CD4-positive, alpha-beta memory T cell (primary cell): ENCODE measurements at regions of chr3 and their contacts with region 1.

Region 1: DNA sequence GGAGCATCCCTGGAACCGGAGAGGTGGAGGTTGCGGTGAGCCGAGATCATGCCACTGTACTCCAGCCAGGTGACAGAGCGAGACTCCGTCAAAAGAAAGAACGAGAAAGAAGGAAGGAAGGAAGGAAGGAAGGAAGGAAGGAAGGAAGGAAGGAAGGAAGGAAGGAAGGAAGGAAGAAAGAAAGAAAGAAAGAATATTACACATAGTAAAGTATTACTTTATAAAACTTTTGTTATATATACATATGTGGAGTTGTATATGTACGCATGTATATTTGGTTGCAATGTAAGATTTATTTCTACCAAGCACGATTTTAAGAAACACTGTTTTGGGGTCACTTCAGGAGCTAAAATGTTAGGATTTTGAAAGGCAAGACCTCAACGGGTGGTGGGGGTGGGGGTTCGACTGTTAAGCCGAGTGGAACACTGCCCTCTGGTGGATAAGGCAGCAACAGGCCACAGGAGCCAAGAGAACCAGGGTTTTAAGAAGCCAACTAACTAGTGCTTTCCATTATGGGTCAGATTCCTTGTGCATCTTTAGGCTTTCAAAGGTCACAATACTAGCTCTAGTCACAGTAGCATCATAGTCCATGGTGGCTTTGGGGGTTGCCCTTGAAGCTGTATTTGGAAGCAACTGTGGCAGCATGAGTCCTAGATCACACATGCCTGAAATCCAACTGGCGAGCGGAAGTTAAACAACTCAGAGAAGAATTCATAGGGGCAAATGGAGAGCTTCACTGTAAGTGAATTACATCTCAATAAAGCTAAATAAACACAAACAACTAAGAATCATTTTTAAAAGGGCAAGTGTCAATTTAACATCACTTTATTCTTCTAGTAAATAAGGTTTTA is 22.5 kb downstream of the GLB1 start:
- DNase-seq: peak; percentile 62 to 68 (median 65)
- H3K4me3 ChIP-seq: no peak overlapping the region
- H3K4me3 Mint-ChIP-seq: peak overlapping the region in 3 of 8 donors; percentile 56 to 70 (median 67)
- H3K27ac ChIP-seq: no peak overlapping the region
- H3K27ac Mint-ChIP-seq: peak overlapping the region; percentile 34 to 75 (median 54)
- H3K4me1 ChIP-seq: peaks cover 40% of the 10 kb centered on the region
- H3K4me1 Mint-ChIP-seq: peaks cover 31 to 55% (median 43%) of the 10 kb centered on the region in 4 donors
- H3K27me3 ChIP-seq: no peaks in the 10 kb centered on the region
- H3K27me3 Mint-ChIP-seq: no peaks in the 10 kb centered on the region

Region 2: DNA sequence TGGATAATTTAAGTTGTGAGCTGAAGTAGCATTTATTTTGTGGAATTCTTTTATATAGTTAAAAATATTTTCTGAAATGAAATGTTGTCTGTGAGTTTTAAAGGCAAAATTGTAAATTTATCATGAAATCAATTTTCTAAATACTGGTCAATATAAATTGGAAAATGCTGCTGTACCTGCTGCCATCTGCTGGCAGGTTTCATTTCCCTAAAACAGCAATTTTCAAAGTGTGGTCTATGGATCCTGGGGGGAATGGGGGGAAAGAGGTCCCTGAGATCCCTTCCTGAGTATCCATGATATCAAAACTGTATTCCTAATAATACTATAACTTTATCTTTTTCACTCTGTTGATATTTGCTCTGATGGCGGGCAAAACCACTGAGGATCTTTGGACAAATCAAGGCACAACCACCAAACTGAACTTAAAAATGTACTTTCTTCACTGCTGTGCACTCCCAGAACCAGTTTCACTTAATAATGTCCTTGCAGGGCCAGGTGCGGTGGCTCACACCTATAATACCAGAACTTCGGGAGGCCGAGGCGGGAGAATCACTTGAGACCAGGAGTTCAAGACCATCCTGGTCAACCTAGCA is 140.2 kb before region 1 on chr3:
- CTCF ChIA-PET with region 1: interaction called, 11 read pairs
- POLR2A ChIA-PET with region 1: no interaction called
- intact Hi-C with region 1: no loop called
- DNase-seq: no peak
- H3K4me3 ChIP-seq: no peak overlapping the region
- H3K4me3 Mint-ChIP-seq: no peak overlapping the region
- H3K27ac ChIP-seq: no peak overlapping the region
- H3K27ac Mint-ChIP-seq: no peak overlapping the region
- H3K4me1 ChIP-seq: no peaks in the 10 kb centered on the region
- H3K4me1 Mint-ChIP-seq: no peaks in the 10 kb centered on the region
- H3K27me3 ChIP-seq: no peaks in the 10 kb centered on the region
- H3K27me3 Mint-ChIP-seq: peaks cover 0 to 14% of the 10 kb centered on the region in 2 donors

Region 3: GRCh38 chr3:32973982-32974381 is 100.5 kb before region 1 on chr3:
- CTCF ChIA-PET with region 1: interaction called, 19 read pairs
- POLR2A ChIA-PET with region 1: interaction called, 6 read pairs
- intact Hi-C with region 1: no loop called
- DNase-seq: peak; percentile 54 to 72 (median 62)
- H3K4me3 ChIP-seq: no peak overlapping the region
- H3K4me3 Mint-ChIP-seq: peak overlapping the region in 7 of 8 donors; percentile 47 to 85 (median 72)
- H3K27ac ChIP-seq: peak overlapping the region; percentile 14
- H3K27ac Mint-ChIP-seq: peak overlapping the region; percentile 62 to 93 (median 87)
- H3K4me1 ChIP-seq: peaks cover 48% of the 10 kb centered on the region
- H3K4me1 Mint-ChIP-seq: peaks cover 40 to 66% (median 46%) of the 10 kb centered on the region in 4 donors
- H3K27me3 ChIP-seq: no peaks in the 10 kb centered on the region
- H3K27me3 Mint-ChIP-seq: no peaks in the 10 kb centered on the region

Region 4: DNA sequence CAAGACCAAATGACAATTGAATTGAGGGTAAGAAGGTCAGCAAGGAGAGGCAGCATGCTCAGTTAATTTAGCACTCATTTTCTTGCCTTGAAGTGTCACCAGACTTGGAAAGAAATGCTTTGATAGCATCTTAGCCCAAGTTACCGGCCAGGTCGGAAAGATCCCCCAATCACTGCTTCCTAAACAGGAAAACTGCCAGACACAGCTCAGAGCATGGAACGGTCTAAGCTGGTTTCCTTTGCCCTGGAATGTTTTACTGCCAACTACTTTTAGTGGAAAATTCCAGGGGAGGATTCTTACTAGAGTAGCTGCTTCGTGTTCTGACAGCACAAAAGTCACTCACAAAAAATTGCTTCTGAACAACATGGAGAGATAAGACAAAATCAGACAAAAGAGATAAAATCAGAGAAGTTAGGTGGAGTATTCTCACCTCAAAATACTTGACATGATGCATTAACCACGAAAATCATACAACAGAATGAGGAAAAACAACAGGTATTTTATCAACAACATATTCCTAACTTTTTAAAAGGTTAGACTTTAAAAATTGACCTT is 57.5 kb before region 1 on chr3:
- CTCF ChIA-PET with region 1: interaction called, 17 read pairs
- POLR2A ChIA-PET with region 1: interaction called, 4 read pairs
- intact Hi-C with region 1: loop called (anchors 2 kb)
- DNase-seq: no peak
- H3K4me3 ChIP-seq: no peak overlapping the region
- H3K4me3 Mint-ChIP-seq: peak overlapping the region; percentile 28 to 79 (median 55)
- H3K27ac ChIP-seq: peak overlapping the region; percentile 11
- H3K27ac Mint-ChIP-seq: peak overlapping the region; percentile 2 to 96 (median 82)
- H3K4me1 ChIP-seq: peaks cover 71% of the 10 kb centered on the region
- H3K4me1 Mint-ChIP-seq: peaks cover 58 to 96% (median 77%) of the 10 kb centered on the region in 4 donors
- H3K27me3 ChIP-seq: no peaks in the 10 kb centered on the region
- H3K27me3 Mint-ChIP-seq: no peaks in the 10 kb centered on the region

Region 5: DNA sequence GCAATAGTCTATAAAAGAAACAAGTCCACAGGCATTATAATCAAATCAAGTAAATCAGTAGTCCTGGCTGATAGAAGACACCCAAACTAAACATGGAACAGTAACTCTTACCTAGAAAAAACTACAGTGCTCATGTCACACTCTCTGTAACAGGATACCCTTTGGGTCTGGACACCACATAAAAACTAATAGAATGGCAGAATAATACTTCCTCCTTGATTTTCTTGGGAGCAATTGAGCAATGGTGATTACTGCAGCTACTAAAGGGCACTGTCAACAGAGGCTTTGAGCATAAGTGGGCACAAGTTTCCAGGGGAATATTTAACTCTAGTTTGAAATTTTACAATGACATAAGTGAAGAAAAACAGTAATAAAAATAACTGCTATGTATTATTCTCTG is 37.0 kb before region 1 on chr3:
- CTCF ChIA-PET with region 1: interaction called, 171 read pairs
- POLR2A ChIA-PET with region 1: interaction called, 6 read pairs
- intact Hi-C with region 1: no loop called
- DNase-seq: no peak
- H3K4me3 ChIP-seq: no peak overlapping the region
- H3K4me3 Mint-ChIP-seq: no peak overlapping the region
- H3K27ac ChIP-seq: no peak overlapping the region
- H3K27ac Mint-ChIP-seq: peak overlapping the region in 1 of 7 donors; percentile 42
- H3K4me1 ChIP-seq: peaks cover 25% of the 10 kb centered on the region
- H3K4me1 Mint-ChIP-seq: peaks cover 24 to 42% (median 33%) of the 10 kb centered on the region in 4 donors
- H3K27me3 ChIP-seq: no peaks in the 10 kb centered on the region
- H3K27me3 Mint-ChIP-seq: no peaks in the 10 kb centered on the region

Region 6: GRCh38 chr3:33089515-33089914 is 15.1 kb after region 1 on chr3:
- CTCF ChIA-PET with region 1: interaction called, 18 read pairs
- POLR2A ChIA-PET with region 1: no interaction called
- intact Hi-C with region 1: no loop called
- DNase-seq: peak in 4 of 5 donors; percentile 26 to 48 (median 35)
- H3K4me3 ChIP-seq: no peak overlapping the region
- H3K4me3 Mint-ChIP-seq: peak overlapping the region in 7 of 8 donors; percentile 2 to 57 (median 32)
- H3K27ac ChIP-seq: peak overlapping the region; percentile 11
- H3K27ac Mint-ChIP-seq: peak overlapping the region; percentile 36 to 82 (median 67)
- H3K4me1 ChIP-seq: peaks cover 77% of the 10 kb centered on the region
- H3K4me1 Mint-ChIP-seq: peaks cover 59 to 94% (median 78%) of the 10 kb centered on the region in 4 donors
- H3K27me3 ChIP-seq: no peaks in the 10 kb centered on the region
- H3K27me3 Mint-ChIP-seq: no peaks in the 10 kb centered on the region

Region 7: GRCh38 chr3:33372218-33373081 is 298.0 kb after region 1 on chr3:
- CTCF ChIA-PET with region 1: interaction called, 14 read pairs
- POLR2A ChIA-PET with region 1: no interaction called
- intact Hi-C with region 1: loop called (anchors 5 kb)
- DNase-seq: peak; percentile 39 to 57 (median 49)
- H3K4me3 ChIP-seq: no peak overlapping the region
- H3K4me3 Mint-ChIP-seq: peak overlapping the region in 1 of 8 donors; percentile 7
- H3K27ac ChIP-seq: no peak overlapping the region
- H3K27ac Mint-ChIP-seq: peak overlapping the region in 1 of 7 donors; percentile 51
- H3K4me1 ChIP-seq: no peaks in the 10 kb centered on the region
- H3K4me1 Mint-ChIP-seq: peaks cover 2 to 7% (median 5%) of the 10 kb centered on the region in 4 donors
- H3K27me3 ChIP-seq: no peaks in the 10 kb centered on the region
- H3K27me3 Mint-ChIP-seq: peaks cover 11 to 12% of the 10 kb centered on the region in 2 donors